Posterior vena cava (tissue), 2 donors: ENCODE measurements at regions of chr16 and their contacts with region 1.

Region 1: DNA sequence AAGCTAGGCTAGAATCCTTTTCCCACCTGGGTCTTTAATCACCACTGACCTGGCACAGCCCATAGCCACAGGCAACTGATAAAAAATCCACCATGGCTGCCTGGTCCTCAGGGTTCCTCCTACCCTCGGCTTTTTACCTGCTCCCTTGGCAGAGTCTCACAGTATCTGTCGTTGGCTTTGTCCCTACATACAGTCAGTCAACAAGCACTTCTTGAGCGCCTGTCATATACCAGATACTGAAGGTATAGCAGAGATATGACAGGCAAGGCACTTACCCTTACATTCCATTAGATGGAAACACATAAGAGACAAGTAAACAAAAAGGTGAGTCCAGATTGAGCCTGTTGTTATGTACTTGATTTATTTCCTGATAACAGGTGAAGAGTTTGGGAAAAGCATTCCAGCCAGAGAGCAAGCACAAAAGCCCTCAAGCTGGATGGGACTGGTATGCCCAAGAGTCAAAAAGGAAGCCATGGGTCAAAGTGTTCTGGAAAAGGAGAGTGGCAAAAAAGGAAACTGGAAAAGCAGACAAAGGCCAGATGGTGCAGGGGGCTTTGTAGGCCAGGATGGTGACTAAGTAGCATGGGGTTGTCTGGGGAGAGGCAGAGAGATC is 247.0 kb downstream of the CHD9NB start:
- DNase-seq: no peak

Region 2: DNA sequence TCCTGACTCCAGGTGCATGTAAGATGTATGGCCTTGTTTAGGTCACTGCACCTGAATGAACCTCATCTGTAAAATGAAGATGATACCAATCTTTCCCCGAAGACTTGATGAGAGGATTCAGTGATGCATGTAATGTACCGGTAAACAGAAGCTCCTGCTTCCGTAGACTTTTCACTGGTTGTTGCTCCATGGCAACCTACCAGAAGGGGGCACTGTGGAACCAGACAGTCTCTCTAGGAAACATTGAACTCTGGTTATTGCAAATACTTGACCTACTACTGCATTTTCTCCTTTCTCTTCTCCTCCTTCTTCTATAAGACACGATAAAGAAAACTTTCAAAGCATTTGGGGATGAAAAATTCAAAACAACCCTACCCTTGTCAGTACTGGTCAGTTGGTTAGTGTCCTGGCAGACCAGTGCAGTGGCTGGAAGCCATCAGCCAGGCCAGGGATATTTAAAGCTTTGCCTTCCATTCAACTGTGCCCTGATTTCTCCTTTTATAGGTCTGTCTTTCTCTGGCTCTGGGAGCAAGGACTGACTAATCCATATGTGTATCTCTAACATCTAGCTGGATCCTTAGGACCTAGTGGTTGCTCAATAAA is 987.2 kb before region 1 on chr16:
- intact Hi-C with region 1: no loop called
- DNase-seq: no peak

Region 3: DNA sequence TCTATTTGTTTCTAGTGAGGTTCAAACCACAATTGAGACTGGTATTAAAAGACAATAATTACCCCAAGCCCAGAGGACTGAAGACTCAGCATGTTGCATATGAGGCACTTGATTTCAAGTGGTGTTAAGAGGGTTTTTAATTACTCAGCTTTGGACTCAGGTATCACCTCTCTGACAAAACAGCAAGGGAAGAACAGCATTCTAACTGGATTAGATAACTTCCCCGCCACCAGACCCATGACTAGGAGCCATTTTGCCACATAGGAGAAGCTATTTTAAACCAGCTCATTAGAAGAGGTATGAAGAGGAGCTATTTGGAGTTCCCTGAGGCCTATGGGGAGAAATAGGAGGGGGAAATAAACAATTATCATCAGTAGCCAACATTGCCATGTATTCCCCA is 32.6 kb before region 1 on chr16:
- intact Hi-C with region 1: no loop called
- DNase-seq: no peak

Region 4: GRCh38 chr16:52993179-52993578 is 187.5 kb after region 1 on chr16:
- intact Hi-C with region 1: loop called in 1 of 2 experiments (anchors 5 kb)
- DNase-seq: no peak